Esophagus muscularis mucosa (tissue), 4 donors: ENCODE measurements at regions of chr10 and their contacts with region 1.

Region 1: DNA sequence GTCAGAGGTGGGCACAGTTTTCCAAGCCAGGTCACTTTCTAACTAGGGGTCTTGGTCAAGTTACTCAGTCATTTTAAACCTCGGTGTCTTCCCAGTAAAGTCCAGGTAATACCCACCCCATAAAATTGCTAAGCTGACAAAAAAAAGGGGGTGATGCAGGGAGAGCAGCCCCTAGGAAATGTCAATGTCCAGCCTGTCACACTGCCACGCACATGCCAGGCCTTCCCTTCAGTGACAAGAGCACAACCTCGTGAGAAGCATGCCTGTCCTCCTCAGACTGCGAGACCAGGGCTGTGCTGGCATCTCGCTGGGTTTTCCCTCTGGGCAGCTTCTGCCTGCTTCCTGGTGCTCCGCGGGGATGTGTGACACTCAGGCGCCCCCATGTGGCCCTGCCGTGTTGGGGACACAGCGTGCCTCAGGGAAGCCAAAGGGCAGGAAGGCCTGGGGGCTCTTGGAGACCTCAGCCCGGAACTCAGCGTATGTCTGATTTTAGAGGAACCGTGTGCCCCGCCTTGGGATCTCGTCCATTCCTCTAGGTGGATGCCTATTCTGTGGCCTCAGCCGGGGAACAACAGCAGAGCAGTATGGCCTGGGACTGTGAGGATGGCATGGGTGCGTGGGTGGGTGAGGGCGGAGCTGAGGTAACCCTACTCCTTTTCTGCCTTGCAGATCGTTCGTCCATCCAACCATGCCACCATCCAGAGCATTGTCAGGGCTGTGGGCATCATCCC is 10.2 kb upstream of the GDF2 start:
- DNase-seq: peak; percentile 93
- H3K4me3 ChIP-seq: no peak overlapping the region
- H3K27ac ChIP-seq: no peak overlapping the region
- H3K4me1 ChIP-seq: peaks cover 0 to 14% (median 13%) of the 10 kb centered on the region in 4 donors
- H3K27me3 ChIP-seq: peaks cover 0 to 6% (median 0%) of the 10 kb centered on the region in 4 donors
- CTCF ChIP-seq: peak; percentile 64 to 74 (median 65)
- EP300 ChIP-seq: no peak
- POLR2A ChIP-seq: no peak

Region 2: GRCh38 chr10:47024399-47025252 is 287.5 kb before region 1 on chr10:
- intact Hi-C with region 1: loop called (anchors 2 kb)
- DNase-seq: peak; percentile 86
- H3K4me3 ChIP-seq: no peak overlapping the region
- H3K27ac ChIP-seq: no peak overlapping the region
- H3K4me1 ChIP-seq: peaks cover 0 to 20% (median 13%) of the 10 kb centered on the region in 4 donors
- H3K27me3 ChIP-seq: no peaks in the 10 kb centered on the region
- CTCF ChIP-seq: peak; percentile 49 to 76 (median 65)
- EP300 ChIP-seq: no peak
- POLR2A ChIP-seq: no peak

Region 3: GRCh38 chr10:47047671-47048525 is 264.2 kb before region 1 on chr10:
- intact Hi-C with region 1: loop called (anchors 5 kb)
- DNase-seq: no peak
- H3K4me3 ChIP-seq: no peak overlapping the region
- H3K27ac ChIP-seq: no peak overlapping the region
- H3K4me1 ChIP-seq: peaks cover 0 to 17% (median 12%) of the 10 kb centered on the region in 4 donors
- H3K27me3 ChIP-seq: no peaks in the 10 kb centered on the region
- CTCF ChIP-seq: peak; percentile 68 to 78 (median 76)
- EP300 ChIP-seq: no peak
- POLR2A ChIP-seq: no peak

Region 4: GRCh38 chr10:47257396-47258120 is 54.5 kb before region 1 on chr10:
- intact Hi-C with region 1: no loop called
- DNase-seq: no peak
- H3K4me3 ChIP-seq: no peak overlapping the region
- H3K27ac ChIP-seq: no peak overlapping the region
- H3K4me1 ChIP-seq: peaks cover 4 to 9% (median 7%) of the 10 kb centered on the region in 4 donors
- H3K27me3 ChIP-seq: no peaks in the 10 kb centered on the region
- CTCF ChIP-seq: no peak
- EP300 ChIP-seq: no peak
- POLR2A ChIP-seq: no peak